ENCODE measurements at regions of chr10 and their contacts with region 1.

Region 1: GRCh38 chr10:131617113-131617858 is 283.5 kb upstream of the PPP2R2D start:
- DNase-seq: no peak
- ATAC-seq: no peak
- H3K4me3 ChIP-seq: no peak overlapping the region
- H3K4me3 Mint-ChIP-seq: no peak overlapping the region
- H3K27ac ChIP-seq: no peak overlapping the region
- H3K27ac Mint-ChIP-seq: no peak overlapping the region
- H3K4me1 ChIP-seq: no peaks in the 10 kb centered on the region
- H3K4me1 Mint-ChIP-seq: no peaks in the 10 kb centered on the region
- H3K27me3 ChIP-seq: no peaks in the 10 kb centered on the region
- H3K27me3 Mint-ChIP-seq: peaks cover 13% of the 10 kb centered on the region
- CTCF ChIP-seq: no peak

Region 2: DNA sequence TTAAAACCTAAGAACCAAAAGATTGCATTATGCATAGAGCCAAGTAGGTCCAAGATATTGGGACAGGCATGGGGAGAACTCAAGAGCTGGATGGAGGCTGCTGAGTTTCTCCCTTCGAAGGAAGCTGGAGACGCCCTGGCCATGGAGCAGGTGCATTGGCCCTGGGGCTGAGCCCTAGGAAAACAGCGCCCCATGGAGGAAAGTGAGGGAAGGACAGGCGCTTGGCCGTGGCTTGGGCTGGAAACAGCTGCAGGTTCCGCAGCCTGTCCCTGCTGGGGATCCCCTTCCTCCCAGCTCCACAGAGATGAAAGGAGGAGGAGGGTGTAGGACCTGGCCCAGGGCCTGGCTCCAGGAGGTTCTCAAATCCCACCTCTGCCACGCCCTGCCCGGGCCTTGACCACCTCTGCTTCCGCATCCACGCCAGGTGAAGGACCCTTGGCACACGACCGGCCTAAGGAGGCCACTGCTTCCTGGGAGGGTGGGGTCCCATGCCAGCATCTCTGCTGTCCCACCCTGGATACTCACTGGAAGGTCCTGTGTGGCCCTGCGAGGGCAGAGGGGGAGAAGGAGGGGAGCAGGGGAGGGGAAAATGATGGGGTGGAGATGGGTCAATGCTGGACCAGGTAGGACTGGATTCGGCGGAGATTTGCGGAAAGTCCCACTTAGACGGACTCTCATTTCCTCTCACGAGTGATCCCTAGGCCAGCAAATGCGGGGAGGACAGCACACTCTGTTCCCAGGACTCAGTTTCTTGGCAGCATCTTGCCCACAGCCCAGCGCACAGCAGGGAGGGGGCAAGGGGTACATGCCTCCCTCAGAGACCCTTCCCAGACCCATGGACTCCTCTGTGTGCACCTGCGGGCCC is 47.2 kb before region 1 on chr10:
- CTCF ChIA-PET with region 1: no interaction called
- POLR2A ChIA-PET with region 1: no interaction called
- intact Hi-C with region 1: loop called in 1 of 2 experiments (anchors 5 kb)
- DNase-seq: peak in 1 of 9 experiments; percentile 21
- ATAC-seq: no peak
- H3K4me3 ChIP-seq: no peak overlapping the region
- H3K4me3 Mint-ChIP-seq: no peak overlapping the region
- H3K27ac ChIP-seq: no peak overlapping the region
- H3K27ac Mint-ChIP-seq: no peak overlapping the region
- H3K4me1 ChIP-seq: no peaks in the 10 kb centered on the region
- H3K4me1 Mint-ChIP-seq: no peaks in the 10 kb centered on the region
- H3K27me3 ChIP-seq: no peaks in the 10 kb centered on the region
- H3K27me3 Mint-ChIP-seq: no peaks in the 10 kb centered on the region
- CTCF ChIP-seq: no peak